ENCODE measurements at regions of chr7 and their contacts with region 1.

Region 1: DNA sequence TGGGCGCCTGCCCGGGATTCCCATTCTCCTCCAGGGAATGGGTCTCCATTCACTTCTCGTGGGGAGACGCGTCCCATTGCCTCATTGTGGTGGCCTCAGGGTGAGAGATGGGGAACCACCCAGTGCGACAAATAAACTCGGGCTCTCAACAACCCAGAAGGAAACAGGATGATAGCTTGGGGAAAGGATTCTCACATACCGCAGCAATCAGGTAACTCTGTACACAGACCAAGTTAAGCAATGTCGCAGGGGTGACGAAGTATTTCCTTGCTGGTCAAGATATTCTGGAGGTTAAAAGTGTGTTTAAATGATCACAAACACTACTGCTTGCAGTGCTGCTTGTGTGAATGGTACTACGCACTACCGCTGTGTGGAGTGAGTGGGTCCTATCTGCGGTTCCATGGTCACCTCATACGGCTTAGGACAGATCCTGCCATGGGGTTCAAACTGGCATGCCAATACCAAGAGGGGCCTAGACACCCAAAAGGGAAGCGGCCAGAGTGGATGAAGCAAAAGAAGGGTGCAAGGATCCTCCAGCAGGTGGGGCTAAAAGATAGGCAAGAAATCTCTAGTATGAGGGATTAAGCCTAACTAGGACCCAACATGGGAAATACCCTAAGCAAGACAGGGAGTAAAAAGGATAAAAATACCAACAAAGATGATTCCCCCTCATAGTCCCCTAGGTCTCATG is 143.8 kb upstream of the TMEM106B start:
- DNase-seq: peak; percentile 83
- ATAC-seq: peak; percentile 50
- H3K4me3 ChIP-seq: peak overlapping the region; percentile 58
- H3K27ac ChIP-seq: peak overlapping the region; percentile 100
- H3K4me1 ChIP-seq: peaks cover 29% of the 10 kb centered on the region
- H3K27me3 ChIP-seq: no peaks in the 10 kb centered on the region
- CTCF ChIP-seq: peak; percentile 86

Region 2: DNA sequence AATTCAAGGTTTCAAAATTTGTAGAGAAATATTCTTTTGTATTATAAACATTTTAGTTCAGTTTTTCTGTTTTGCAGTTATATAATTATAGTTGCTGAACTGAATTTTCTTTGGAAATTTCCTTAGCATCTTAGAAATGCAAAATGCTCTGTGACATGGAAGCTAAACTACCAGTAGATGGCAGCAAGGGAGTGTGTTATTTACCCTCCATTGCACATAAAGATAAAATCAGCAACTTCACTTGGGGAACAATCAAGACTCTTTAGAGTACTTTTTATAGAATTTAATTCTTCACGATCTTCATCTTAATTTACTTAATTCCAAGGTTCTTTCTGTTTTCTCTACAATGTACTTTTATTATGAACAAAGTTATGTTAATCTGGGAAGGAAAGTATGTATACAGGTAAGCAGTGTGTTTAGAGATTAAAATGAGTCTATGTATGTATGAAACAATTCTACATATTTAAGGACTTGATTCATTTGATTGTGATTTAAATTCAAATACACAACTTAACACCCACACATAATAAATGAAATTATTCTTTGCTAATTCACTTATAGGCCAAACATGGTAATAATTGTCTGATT is 639.5 kb before region 1 on chr7:
- CTCF ChIA-PET with region 1: no interaction called
- POLR2A ChIA-PET with region 1: no interaction called
- intact Hi-C with region 1: loop called (anchors 1 kb)
- DNase-seq: peak; percentile 74
- ATAC-seq: peak; percentile 62
- H3K4me3 ChIP-seq: no peak overlapping the region
- H3K27ac ChIP-seq: no peak overlapping the region
- H3K4me1 ChIP-seq: no peaks in the 10 kb centered on the region
- H3K27me3 ChIP-seq: no peaks in the 10 kb centered on the region
- CTCF ChIP-seq: peak; percentile 87

Region 3: DNA sequence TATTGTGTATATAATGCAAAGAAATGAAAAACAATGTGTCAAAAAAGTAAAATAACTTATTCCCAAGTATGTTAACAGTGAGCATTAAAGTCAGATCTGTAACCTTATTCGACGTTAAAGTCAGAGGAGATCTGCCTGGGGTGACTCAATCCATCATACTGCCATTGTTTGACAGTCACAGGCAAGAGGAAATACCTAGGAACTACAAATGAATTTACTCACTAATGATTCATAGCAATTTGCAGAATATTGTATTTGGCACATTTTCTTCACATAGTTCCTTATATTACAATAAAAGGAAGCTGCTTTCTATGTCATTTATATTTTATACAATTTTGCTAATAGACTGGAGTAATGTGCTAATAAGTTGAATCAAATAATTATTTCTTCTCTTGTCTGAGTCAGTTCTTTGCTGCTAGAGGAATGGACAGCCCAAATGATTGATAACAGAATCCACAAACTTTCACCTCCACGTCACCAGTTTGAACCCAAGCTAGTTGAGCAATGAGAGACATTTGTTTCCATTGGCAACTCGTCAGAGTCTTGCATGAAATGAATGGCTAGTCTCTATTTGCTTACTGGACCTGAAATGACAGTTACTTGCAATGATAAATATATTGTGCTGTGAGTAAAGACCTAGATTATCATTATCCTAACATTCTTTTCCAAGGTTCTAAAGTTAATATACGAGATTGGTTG is 95.3 kb after region 1 on chr7:
- CTCF ChIA-PET with region 1: no interaction called
- POLR2A ChIA-PET with region 1: no interaction called
- intact Hi-C with region 1: loop called (anchors 2 kb)
- DNase-seq: peak; percentile 90
- ATAC-seq: peak; percentile 88
- H3K4me3 ChIP-seq: no peak overlapping the region
- H3K27ac ChIP-seq: peak overlapping the region; percentile 79
- H3K4me1 ChIP-seq: peaks cover 36% of the 10 kb centered on the region
- H3K27me3 ChIP-seq: no peaks in the 10 kb centered on the region
- CTCF ChIP-seq: no peak

Region 4: DNA sequence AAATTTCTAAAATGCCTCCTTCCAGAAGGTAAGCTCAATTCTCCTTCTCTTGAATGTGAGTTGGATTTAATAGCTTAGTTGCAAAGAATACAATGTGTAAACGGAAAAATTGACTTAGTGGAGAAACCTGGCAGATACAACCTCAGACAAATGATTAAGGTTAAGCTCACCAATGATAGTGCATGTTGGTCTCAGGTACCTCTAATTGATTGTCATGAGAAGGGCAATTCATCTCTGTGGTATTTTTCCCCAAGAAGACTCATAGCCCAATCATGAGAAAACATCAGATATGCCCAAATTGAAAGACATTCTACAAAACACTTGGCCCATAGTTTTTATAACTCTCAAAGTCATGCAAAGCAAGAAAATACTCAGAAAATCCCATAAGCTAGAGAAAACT is 107.6 kb after region 1 on chr7:
- CTCF ChIA-PET with region 1: no interaction called
- POLR2A ChIA-PET with region 1: no interaction called
- intact Hi-C with region 1: no loop called
- DNase-seq: peak; percentile 73
- ATAC-seq: peak; percentile 64
- H3K4me3 ChIP-seq: no peak overlapping the region
- H3K27ac ChIP-seq: peak overlapping the region; percentile 53
- H3K4me1 ChIP-seq: peaks cover 22% of the 10 kb centered on the region
- H3K27me3 ChIP-seq: no peaks in the 10 kb centered on the region
- CTCF ChIP-seq: no peak

Region 5: GRCh38 chr7:12211054-12211710 is 143.9 kb after region 1 on chr7 and contains the start of gene TMEM106B:
- CTCF ChIA-PET with region 1: no interaction called
- POLR2A ChIA-PET with region 1: interaction called, 5 read pairs
- intact Hi-C with region 1: loop called (anchors 1 kb)
- DNase-seq: peak; percentile 97
- ATAC-seq: peak; percentile 87
- H3K4me3 ChIP-seq: peak within 1 kb of the TSS; percentile 80
- H3K27ac ChIP-seq: peak within 1 kb of the TSS; percentile 70
- H3K4me1 ChIP-seq: peaks cover 36% of the 10 kb centered on the region
- H3K27me3 ChIP-seq: no peaks in the 10 kb centered on the region
- CTCF ChIP-seq: peak; percentile 39; the same call in 1 of the 2 replicates
- total RNA-seq, gene TMEM106B: 32.5 and 41.6 TPM in 2 replicates

Region 6: GRCh38 chr7:12244129-12244528 is 176.8 kb after region 1 on chr7:
- CTCF ChIA-PET with region 1: interaction called, 4 read pairs
- POLR2A ChIA-PET with region 1: no interaction called
- intact Hi-C with region 1: loop called (anchors 2 kb)
- DNase-seq: peak; percentile 59
- ATAC-seq: peak; percentile 83
- H3K4me3 ChIP-seq: no peak overlapping the region
- H3K27ac ChIP-seq: no peak overlapping the region
- H3K4me1 ChIP-seq: peaks cover 11% of the 10 kb centered on the region
- H3K27me3 ChIP-seq: no peaks in the 10 kb centered on the region
- CTCF ChIP-seq: peak; percentile 74